MCF 10A (cell line): ENCODE measurements at regions of chr10 and their contacts with region 1.

Region 1: GRCh38 chr10:133309111-133309719 is 501 bp downstream of the ZNF511 start:
- DNase-seq: peak; percentile 91
- H3K4me3 Mint-ChIP-seq: peak overlapping the region; percentile 98
- H3K27ac Mint-ChIP-seq: no peak overlapping the region
- H3K4me1 Mint-ChIP-seq: peaks cover 18% of the 10 kb centered on the region
- H3K27me3 Mint-ChIP-seq: no peaks in the 10 kb centered on the region
- CTCF ChIP-seq: no peak

Region 2: DNA sequence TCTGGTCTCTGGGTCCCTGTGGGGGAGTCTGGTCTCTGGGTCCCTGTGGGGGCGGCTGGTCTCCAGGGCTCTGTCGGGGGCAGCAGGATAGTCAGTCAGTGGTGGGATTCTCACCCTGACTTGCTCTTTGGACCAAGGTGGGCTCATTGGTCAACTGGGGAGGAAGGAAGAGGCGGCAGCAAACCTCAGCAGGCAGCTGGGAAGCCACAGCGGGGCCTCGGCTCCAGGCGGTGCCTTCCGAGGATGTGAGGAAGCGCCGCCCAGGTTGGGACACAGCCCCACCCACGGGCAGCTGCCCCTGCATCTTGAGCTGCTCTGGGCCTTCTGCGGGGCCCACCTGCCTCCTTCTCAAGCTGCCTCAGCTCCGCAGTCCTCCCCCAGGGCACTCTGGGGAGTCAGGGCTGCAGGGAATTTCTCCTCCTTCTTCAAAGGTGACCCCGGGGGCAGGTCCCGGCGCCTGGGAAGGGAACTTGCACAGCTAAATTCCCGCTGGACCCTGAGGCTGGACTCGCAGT is 169.6 kb before region 1 on chr10:
- CTCF ChIA-PET with region 1: interaction called, 3 read pairs
- POLR2A ChIA-PET with region 1: no interaction called
- intact Hi-C with region 1: loop called (anchors 5 kb)
- DNase-seq: no peak
- H3K4me3 Mint-ChIP-seq: no peak overlapping the region
- H3K27ac Mint-ChIP-seq: no peak overlapping the region
- H3K4me1 Mint-ChIP-seq: no peaks in the 10 kb centered on the region
- H3K27me3 Mint-ChIP-seq: no peaks in the 10 kb centered on the region
- CTCF ChIP-seq: no peak

Region 3: GRCh38 chr10:133278577-133279265 is 30.5 kb before region 1 on chr10:
- CTCF ChIA-PET with region 1: interaction called, 8 read pairs
- POLR2A ChIA-PET with region 1: interaction called, 13 read pairs
- intact Hi-C with region 1: loop called (anchors 1 kb)
- DNase-seq: peak; percentile 90
- H3K4me3 Mint-ChIP-seq: peak overlapping the region; percentile 48
- H3K27ac Mint-ChIP-seq: peak overlapping the region; percentile 85
- H3K4me1 Mint-ChIP-seq: peaks cover 16% of the 10 kb centered on the region
- H3K27me3 Mint-ChIP-seq: no peaks in the 10 kb centered on the region
- CTCF ChIP-seq: no peak

Region 4: DNA sequence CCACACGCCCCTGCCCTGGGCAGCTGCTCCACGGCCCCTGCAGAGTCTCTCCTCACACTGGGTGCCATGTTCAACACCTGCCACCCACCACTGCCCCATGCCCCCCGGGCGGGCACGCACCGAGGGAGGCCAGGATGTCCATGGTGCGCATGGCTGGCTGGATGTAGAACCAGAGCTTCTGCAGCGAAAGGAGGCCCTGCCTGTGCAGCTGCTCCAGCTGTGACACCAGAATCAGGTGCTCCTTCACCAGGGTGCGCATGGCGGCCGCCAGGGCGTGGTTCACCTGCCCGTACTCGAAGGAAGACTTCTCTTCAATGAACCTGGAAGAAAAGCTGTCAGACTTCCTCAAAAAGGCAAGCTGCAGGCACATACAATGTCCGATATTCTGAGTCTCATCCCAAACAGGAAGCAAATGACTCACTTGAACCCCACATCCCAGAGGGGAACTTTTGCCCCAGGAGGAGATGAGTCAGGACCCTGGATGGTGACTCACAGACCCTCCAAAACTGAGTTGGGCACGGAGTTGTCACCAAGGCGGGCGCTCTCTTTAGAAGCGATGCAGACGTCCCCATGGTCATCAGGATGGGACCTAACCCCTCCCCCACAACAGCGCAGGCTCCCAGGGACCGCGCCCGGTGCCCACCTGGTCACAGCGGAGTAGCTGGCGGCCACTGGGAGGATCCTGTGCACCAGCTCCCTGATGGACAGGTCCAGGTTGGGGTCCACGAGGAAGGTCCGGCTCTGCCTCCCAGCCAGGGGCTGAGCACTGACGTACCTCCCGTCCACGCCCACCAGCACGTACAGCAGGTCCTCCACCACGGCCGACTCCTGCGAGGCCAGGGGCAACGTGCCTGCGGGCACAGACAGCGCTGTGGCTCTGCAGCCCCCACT is 16.1 kb before region 1 on chr10:
- CTCF ChIA-PET with region 1: interaction called, 14 read pairs
- POLR2A ChIA-PET with region 1: interaction called, 3 read pairs
- intact Hi-C with region 1: no loop called
- DNase-seq: peak; percentile 93
- H3K4me3 Mint-ChIP-seq: no peak overlapping the region
- H3K27ac Mint-ChIP-seq: no peak overlapping the region
- H3K4me1 Mint-ChIP-seq: peaks cover 4% of the 10 kb centered on the region
- H3K27me3 Mint-ChIP-seq: no peaks in the 10 kb centered on the region
- CTCF ChIP-seq: no peak

Region 5: GRCh38 chr10:133351408-133352318 is 42.4 kb after region 1 on chr10:
- CTCF ChIA-PET with region 1: no interaction called
- POLR2A ChIA-PET with region 1: no interaction called
- intact Hi-C with region 1: no loop called
- DNase-seq: no peak
- H3K4me3 Mint-ChIP-seq: no peak overlapping the region
- H3K27ac Mint-ChIP-seq: no peak overlapping the region
- H3K4me1 Mint-ChIP-seq: peaks cover 6% of the 10 kb centered on the region
- H3K27me3 Mint-ChIP-seq: no peaks in the 10 kb centered on the region
- CTCF ChIP-seq: no peak